ENCODE measurements at regions of chr1 and their contacts with region 1.

Region 1: GRCh38 chr1:234065794-234066447 is 161.4 kb downstream of the SLC35F3 start:
- DNase-seq: peak; percentile 87
- H3K4me3 ChIP-seq: no peak overlapping the region
- H3K27ac ChIP-seq: no peak overlapping the region
- H3K4me1 ChIP-seq: no peaks in the 10 kb centered on the region
- H3K27me3 ChIP-seq: peaks cover 0 to 5% (median 0%) of the 10 kb centered on the region in 7 donors
- CTCF ChIP-seq: peak in 10 of 11 experiments; percentile 6 to 78 (median 63)
- POLR2A ChIP-seq: no peak

Region 2: GRCh38 chr1:233304489-233305102 is 761.3 kb before region 1 on chr1:
- intact Hi-C with region 1: loop called (anchors 5 kb)
- DNase-seq: no peak
- H3K4me3 ChIP-seq: no peak overlapping the region
- H3K27ac ChIP-seq: no peak overlapping the region
- H3K4me1 ChIP-seq: no peaks in the 10 kb centered on the region
- H3K27me3 ChIP-seq: peaks cover 0 to 20% (median 0%) of the 10 kb centered on the region in 7 donors
- CTCF ChIP-seq: peak; percentile 49 to 78 (median 73)
- POLR2A ChIP-seq: no peak

Region 3: DNA sequence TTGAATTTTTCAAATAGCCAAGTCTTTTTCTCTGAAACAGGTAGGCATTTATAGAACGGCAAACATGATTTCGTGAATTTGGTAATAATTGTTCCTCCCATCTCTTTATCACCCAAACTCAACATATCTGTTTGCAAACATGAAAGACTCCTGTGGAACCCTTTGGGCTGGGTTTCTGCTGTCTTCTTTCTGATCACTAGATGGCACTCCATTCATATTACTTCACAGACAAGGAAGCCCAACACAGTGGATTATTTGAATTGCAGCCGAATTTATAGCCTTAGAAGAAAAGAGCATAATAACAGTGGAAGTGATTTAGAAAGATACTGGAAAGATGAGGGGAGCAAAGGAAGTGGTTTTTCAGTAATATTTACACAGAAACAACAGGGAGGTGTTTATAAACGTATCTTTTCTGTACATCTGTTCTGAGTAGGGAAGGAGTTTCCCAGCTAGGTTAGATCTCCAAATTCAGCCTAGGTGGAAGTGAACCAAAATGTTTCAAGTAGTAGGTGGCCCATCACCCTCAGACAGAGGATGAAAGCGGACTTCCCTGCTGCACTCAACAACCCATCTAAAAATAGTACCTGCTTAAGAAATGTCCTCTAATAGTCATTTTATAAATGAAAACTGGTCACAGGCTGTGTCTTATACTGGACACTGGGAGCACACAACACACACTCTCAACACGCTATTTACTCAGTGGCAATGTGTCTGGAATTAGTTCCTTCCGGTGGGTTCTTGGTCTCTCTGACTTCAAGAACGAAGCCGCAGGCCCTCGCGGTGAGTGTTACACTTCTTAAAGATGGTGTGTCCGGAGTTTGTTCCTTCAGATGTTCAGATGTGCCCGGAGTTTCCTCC is 670.8 kb before region 1 on chr1:
- intact Hi-C with region 1: loop called (anchors 10 kb)
- DNase-seq: no peak
- H3K4me3 ChIP-seq: no peak overlapping the region
- H3K27ac ChIP-seq: no peak overlapping the region
- H3K4me1 ChIP-seq: no peaks in the 10 kb centered on the region
- H3K27me3 ChIP-seq: peaks cover 0 to 45% (median 0%) of the 10 kb centered on the region in 7 donors
- CTCF ChIP-seq: peak in 8 of 11 experiments; percentile 20 to 76 (median 52)
- POLR2A ChIP-seq: no peak

Region 4: DNA sequence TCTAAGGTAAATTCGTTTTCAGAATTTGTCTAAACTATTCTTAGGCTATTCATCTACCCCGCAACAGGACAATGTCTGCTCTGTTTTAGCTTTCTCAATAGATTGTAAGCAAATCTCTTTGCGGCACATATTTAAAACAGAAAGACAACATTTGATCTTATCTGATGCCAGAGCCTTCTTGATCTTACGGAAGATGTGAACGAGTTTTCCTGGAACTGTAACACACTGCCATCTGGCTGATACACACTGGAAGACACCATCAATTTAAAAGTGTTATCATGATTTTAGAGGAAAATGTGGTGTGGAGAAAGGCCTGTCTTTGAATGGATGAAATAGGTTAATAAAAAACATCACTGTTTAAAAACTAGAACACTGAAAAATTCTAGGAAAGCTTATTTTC is 343.4 kb after region 1 on chr1:
- intact Hi-C with region 1: no loop called
- DNase-seq: no peak
- H3K4me3 ChIP-seq: no peak overlapping the region
- H3K27ac ChIP-seq: peak overlapping the region in 2 of 8 donors; percentile 8 to 30
- H3K4me1 ChIP-seq: no peaks in the 10 kb centered on the region
- H3K27me3 ChIP-seq: no peaks in the 10 kb centered on the region
- CTCF ChIP-seq: peak in 1 of 11 experiments; percentile 6
- POLR2A ChIP-seq: no peak

Measured in spleen (tissue), 13 donors.